Colonic mucosa (tissue), 4 donors: ENCODE measurements at regions of chr19 and their contacts with region 1.

Region 1: DNA sequence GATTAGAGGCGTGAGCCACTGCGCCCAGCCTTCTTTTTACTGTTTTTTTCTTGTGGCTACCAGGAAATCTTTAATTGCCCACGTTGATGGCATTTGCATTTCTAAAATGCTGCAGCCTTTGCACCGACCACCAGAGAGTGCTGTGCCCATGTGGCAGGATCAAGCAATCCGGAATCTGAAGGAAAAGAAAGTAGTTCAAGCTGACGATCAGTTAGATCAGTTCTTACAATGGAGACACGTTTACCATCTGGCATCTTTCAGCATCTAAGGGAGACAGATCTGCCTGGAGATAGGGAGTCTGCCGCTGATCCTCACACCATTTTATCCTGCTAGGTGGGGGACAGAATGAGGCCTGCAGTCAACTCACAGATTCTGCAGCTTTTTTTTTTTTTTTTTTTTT is 19.9 kb downstream of the TINCR start:
- DNase-seq: no peak
- H3K4me3 ChIP-seq: no peak overlapping the region
- H3K27ac ChIP-seq: no peak overlapping the region
- H3K4me1 ChIP-seq: no peaks in the 10 kb centered on the region
- H3K27me3 ChIP-seq: no peaks in the 10 kb centered on the region
- CTCF ChIP-seq: peak; percentile 35

Region 2: DNA sequence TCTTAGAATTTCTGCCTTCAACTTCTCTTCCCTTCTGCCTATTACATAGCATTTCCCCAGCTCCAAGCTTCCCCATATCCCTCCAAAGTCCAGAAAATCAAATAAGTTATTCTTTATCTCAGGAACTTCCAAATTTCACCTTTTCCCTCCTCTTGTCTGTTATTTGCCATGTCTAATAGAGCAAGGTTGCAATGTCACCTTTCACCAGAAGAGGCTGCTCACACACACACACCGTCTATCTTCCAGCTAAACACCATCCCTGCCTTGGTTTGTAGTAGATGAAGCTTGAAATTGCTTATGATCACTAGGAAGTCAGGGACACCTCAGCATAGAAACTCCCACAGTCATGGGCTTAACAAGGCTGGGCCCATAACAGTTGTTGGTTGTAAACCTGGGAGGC is 44.3 kb before region 1 on chr19:
- intact Hi-C with region 1: no loop called
- DNase-seq: no peak
- H3K4me3 ChIP-seq: no peak overlapping the region
- H3K27ac ChIP-seq: no peak overlapping the region
- H3K4me1 ChIP-seq: no peaks in the 10 kb centered on the region
- H3K27me3 ChIP-seq: no peaks in the 10 kb centered on the region
- CTCF ChIP-seq: no peak

Region 3: GRCh38 chr19:5577785-5578493 is 30.1 kb after region 1 on chr19:
- intact Hi-C with region 1: loop called (anchors 2 kb)
- DNase-seq: peak; percentile 74
- H3K4me3 ChIP-seq: peak overlapping the region; percentile 30
- H3K27ac ChIP-seq: no peak overlapping the region
- H3K4me1 ChIP-seq: peaks cover 4% of the 10 kb centered on the region
- H3K27me3 ChIP-seq: no peaks in the 10 kb centered on the region
- CTCF ChIP-seq: peak; percentile 98

Region 4: DNA sequence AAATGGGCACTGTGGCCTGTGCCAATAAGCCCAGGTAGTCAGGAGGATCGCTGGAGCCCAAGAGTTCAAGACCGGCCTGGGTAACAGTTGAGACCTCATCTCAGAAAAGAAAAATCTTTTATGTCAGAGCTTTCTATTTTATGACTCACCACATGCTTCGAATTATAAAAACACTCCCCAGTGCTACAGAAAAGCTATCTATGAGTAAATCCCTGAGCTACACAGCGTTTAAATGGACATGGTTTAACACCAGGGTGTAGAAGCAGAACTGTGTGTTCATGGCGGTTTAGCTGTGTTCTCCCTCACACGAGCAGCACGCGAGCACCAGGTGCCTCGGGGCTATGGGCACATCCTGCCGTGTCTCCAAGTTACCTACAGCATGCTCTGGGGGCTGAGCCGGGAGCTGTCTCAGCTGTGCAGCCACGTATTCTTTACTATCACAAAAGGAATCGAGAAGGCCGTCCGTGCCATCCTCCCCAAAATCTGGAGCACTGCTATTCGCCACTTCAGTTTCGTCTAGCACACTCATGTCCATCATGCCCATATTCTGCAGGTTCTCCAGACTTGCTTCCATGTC is 68.0 kb after region 1 on chr19:
- intact Hi-C with region 1: no loop called
- DNase-seq: no peak
- H3K4me3 ChIP-seq: no peak overlapping the region
- H3K27ac ChIP-seq: no peak overlapping the region
- H3K4me1 ChIP-seq: peaks cover 3% of the 10 kb centered on the region
- H3K27me3 ChIP-seq: no peaks in the 10 kb centered on the region
- CTCF ChIP-seq: no peak

Region 5: GRCh38 chr19:5870986-5871394 is 323.1 kb after region 1 on chr19:
- intact Hi-C with region 1: no loop called
- DNase-seq: no peak
- H3K4me3 ChIP-seq: no peak overlapping the region
- H3K27ac ChIP-seq: no peak overlapping the region
- H3K4me1 ChIP-seq: no peaks in the 10 kb centered on the region
- H3K27me3 ChIP-seq: no peaks in the 10 kb centered on the region
- CTCF ChIP-seq: no peak